Activated T-helper 1 cell treated with anti-CD3 and anti-CD28 coated beads, Interleukin-12 subunit alpha, Interleukin-12 subunit beta, Interleukin-2, Interleukin-4 antibody, amounts not matched to agents 30 ng/mL and 10 ng/mL and 1 ng/mL, durations not matched to agents 14 hours and 24 hours and 36 hours (primary cell): ENCODE measurements at regions of chr16 and their contacts with region 1.

Region 1: GRCh38 chr16:57576429-57576870 is 34.0 kb downstream of the ADGRG5 start:
- DNase-seq: peak; percentile 74
- H3K4me3 Mint-ChIP-seq: no peak overlapping the region
- H3K27ac Mint-ChIP-seq: peak overlapping the region; percentile 8
- H3K4me1 Mint-ChIP-seq: peaks cover 39% of the 10 kb centered on the region
- H3K27me3 Mint-ChIP-seq: peaks cover 2% of the 10 kb centered on the region

Region 2: DNA sequence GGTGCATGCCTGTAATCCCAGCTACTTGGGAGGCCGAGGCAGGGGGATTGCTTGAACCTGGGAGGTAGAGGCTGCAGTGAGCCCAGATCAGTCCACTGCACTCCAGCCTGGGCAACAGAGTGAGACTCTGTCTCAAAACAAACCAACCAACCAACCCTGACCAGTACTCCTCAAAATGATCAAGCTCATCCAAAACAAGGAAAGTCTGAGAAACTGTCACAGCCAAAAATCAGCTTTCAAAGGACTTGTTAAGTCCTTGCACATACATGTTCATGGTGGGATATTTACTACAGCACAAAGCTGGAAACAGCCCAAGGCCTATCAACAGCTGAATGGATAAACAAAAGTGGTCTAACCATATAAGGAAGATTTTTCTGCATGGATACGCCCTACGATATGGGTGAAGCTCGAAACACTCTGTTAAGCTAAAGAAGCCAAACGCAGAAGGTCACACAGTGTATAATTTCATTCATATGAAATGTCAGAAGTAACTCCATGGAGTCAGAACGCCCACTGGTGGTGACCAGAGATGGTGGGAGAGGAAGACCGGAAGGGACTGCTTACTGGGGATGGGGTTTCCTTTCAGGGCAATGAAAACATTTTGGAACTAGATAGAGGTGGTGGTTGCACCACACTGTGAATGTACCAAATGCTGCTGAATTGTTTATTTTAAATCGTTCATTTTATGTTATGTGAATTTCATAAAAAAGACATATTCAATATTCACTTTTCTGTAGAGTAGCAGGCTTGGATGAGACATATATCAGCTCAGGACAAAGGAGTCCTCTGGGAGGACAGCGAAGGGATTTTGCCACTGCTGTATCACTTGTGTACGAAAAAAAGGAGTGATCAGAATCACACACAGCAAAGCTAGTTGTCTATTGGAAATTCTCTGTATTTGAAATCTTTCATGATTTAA is 154.2 kb before region 1 on chr16:
- intact Hi-C with region 1: no loop called
- DNase-seq: no peak
- H3K4me3 Mint-ChIP-seq: no peak overlapping the region
- H3K27ac Mint-ChIP-seq: no peak overlapping the region
- H3K4me1 Mint-ChIP-seq: peaks cover 14% of the 10 kb centered on the region
- H3K27me3 Mint-ChIP-seq: no peaks in the 10 kb centered on the region

Region 3: DNA sequence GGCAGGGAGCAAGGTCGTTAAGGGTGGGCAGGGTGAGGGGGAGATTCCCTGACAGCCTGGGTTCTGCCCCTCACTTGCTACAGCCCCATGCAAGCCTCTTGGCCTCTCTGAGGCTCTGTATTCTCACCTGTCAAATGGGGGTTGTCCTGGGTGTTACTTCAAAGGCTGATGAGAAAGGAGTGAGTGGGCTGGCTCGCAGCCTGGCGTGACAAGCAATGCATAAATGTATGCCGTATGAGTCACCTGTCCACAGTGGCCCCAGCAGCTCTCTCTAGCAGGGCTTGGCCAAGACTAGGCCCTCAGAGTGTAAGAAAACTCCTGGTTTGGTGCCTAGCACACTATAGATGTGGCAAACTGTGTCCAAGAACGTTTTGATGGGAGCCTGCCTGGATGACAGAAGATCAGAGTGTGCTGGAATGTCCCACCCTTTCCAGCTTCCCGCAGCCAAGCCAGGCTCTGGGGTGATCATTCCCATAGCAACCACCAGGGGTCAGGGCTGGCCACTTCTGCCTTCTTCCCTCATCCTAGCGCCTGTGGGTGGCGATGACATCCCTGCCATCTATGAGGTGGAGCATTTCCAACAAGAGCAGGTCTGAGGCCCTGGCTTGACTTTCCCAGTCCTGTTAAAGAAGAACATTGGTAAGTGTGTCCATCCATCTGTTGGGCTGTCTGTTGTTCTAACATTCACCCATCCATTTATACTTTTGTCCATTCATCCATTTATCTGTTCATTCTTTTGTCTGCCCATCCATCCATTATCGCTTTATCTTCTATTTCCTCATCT is 14.8 kb after region 1 on chr16:
- intact Hi-C with region 1: loop called (anchors 1 kb)
- DNase-seq: peak; percentile 56
- H3K4me3 Mint-ChIP-seq: peak overlapping the region; percentile 63
- H3K27ac Mint-ChIP-seq: peak overlapping the region; percentile 85
- H3K4me1 Mint-ChIP-seq: peaks cover 55% of the 10 kb centered on the region
- H3K27me3 Mint-ChIP-seq: peaks cover 2% of the 10 kb centered on the region

Region 4: GRCh38 chr16:57609541-57610401 is 33.3 kb after region 1 on chr16:
- intact Hi-C with region 1: loop called (anchors 1 kb)
- DNase-seq: peak; percentile 74
- H3K4me3 Mint-ChIP-seq: peak overlapping the region; percentile 69
- H3K27ac Mint-ChIP-seq: peak overlapping the region; percentile 99
- H3K4me1 Mint-ChIP-seq: peaks cover 68% of the 10 kb centered on the region
- H3K27me3 Mint-ChIP-seq: no peaks in the 10 kb centered on the region

Region 5: DNA sequence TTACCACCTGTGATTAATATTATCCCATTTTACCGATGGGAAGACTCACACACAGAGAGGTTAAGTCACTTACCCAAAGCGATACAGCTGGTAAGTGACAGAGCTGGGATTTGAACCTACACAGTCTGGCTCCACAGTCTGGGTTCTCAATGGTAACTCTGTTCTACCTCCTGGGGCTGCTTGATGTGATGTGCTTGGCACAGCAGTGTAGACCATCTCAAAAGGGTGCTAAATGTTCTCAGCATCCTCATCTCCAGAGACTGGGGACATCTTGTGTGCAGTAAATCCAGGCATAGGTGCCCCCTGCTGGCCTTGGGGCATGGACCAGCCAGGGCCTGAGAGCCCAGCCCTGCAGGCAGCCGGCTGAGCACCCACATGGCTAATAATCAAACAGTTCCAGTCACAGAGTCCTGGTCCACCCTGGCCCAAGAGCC is 143.7 kb after region 1 on chr16:
- intact Hi-C with region 1: loop called (anchors 1 kb)
- DNase-seq: peak; percentile 33
- H3K4me3 Mint-ChIP-seq: no peak overlapping the region
- H3K27ac Mint-ChIP-seq: no peak overlapping the region
- H3K4me1 Mint-ChIP-seq: no peaks in the 10 kb centered on the region
- H3K27me3 Mint-ChIP-seq: peaks cover 13% of the 10 kb centered on the region

Region 6: DNA sequence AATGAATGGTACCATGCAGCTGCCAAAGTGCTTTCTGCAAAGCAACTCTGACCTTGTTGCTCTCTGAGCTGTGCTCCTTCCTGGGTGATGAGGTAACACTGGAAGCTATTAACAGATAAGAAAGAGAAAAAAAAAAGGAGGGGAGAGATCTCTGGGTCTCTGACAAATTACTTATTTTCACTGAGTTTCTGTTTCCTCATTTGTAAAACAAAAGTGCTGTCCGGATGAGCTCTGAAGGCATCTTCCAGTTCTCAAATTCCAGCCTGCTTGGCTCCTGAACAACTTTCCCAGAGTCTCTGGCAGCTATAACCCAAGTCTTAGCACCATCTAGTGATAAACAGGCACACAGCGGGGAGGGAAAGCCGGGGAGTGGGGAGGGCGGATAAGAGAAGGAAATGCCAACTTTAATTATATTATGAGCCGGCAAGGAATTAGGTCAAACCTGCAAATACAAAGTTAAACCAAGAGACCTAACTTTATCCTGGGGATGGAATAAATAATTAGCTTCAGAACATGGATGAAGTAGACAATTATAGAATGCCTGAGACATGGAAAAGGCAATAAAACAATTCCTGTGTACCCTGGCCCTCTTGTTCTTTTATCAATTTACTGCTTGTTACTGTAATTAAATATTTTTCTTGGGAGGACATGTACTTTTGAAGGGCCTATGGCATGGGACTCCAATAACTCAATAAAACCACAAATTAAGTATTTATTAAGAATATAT is 287.1 kb after region 1 on chr16:
- intact Hi-C with region 1: loop called (anchors 10 kb)
- DNase-seq: no peak
- H3K4me3 Mint-ChIP-seq: no peak overlapping the region
- H3K27ac Mint-ChIP-seq: no peak overlapping the region
- H3K4me1 Mint-ChIP-seq: no peaks in the 10 kb centered on the region
- H3K27me3 Mint-ChIP-seq: peaks cover 25% of the 10 kb centered on the region